Naive thymus-derived CD8-positive, alpha-beta T cell (primary cell): ENCODE measurements at regions of chr1 and their contacts with region 1.

Region 1: DNA sequence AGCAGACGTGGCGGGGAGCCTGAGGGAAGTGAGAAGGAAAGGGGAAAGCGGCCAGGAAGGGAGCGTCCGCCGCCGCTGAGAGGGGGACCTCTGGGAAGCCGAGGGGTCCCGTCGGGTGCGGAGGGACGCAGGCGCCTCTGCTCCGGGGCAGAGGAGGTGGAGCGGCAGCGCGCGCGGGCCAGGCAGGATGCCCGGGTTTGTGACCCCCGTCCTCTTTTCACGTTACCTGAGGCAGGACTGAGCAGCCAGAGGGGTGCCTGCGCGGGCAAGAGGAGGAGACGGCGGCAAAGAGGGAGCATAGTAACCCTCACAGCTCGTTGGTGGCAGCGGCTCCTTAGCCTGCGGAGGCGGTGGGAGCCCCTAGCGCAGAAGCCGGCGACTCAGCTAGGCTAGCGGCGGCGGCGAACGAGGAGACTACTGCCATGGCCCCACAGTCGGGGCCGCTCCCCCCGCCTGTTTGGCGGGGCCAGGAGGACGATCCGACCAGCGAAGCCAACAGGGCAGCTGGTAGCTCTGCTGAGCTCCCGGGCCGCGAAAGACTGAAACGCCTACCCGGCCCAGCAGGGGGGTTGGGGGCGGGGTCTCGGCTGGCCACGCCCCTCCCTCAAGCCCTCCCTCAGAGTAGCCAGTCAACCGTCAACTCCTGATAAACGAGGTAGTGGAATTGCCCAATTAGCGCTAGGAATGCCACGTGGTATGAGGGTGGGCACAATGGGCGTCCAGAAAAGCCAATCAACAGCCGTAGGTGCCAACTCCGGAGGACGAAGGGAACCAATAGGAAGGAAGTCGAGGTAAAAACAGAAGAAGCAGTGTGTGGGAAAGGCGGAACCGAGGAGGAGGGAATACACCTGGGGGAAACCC is at the start of gene TESK2:
- DNase-seq: peak; percentile 94 to 98 (median 97)
- ATAC-seq: peak; percentile 91 to 94
- H3K4me3 Mint-ChIP-seq: no peak within 1 kb of the TSS
- H3K27ac Mint-ChIP-seq: no peak within 1 kb of the TSS
- H3K4me1 Mint-ChIP-seq: peaks cover 6 to 13% (median 12%) of the 10 kb centered on the region in 4 donors
- H3K27me3 Mint-ChIP-seq: no peaks in the 10 kb centered on the region
- polyA plus RNA-seq, gene TESK2: 2.3 to 3.1 (median 2.7) TPM

Region 2: DNA sequence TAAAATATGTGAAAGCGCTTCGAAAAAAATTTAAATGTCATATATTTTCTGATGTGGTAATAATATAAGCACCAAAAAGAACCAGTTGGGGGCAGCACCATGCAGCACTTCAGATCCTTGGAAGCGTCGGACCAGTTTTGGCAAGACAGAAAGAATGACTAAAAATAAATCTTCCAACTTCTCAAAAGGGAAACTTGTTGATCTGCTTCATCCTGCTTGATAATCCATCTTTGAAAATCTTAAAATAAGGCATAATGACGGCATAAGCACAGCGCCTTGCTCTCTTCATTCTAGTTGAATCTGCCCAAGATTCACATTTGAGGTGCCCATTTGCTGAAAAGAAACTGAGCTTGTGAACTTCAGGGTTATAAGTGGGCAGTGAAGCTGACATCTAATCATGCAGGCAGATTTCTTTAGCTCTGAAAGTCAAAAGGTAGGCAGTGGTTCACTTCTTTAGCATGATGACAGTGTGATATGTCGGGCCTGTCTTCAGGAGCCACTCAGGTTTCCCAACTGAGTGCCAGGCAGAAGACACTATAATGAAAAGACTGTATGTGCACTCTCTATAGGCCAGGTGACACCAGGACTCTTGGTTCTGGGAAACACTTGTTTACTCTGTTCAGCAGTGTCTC is 130.9 kb before region 1 on chr1:
- POLR2A ChIA-PET with region 1: interaction called, 10 read pairs
- DNase-seq: peak in 9 of 10 donors; percentile 23 to 73 (median 46)
- ATAC-seq: peak; percentile 59 to 75
- H3K4me3 Mint-ChIP-seq: peak overlapping the region in 2 of 10 donors; percentile 6 to 46
- H3K27ac Mint-ChIP-seq: peak overlapping the region in 4 of 10 donors; percentile 2 to 47 (median 26)
- H3K4me1 Mint-ChIP-seq: peaks cover 2 to 6% (median 5%) of the 10 kb centered on the region in 4 donors
- H3K27me3 Mint-ChIP-seq: no peaks in the 10 kb centered on the region

Region 3: GRCh38 chr1:45430490-45430889 is 60.4 kb before region 1 on chr1:
- POLR2A ChIA-PET with region 1: no interaction called
- DNase-seq: no peak
- ATAC-seq: no peak
- H3K4me3 Mint-ChIP-seq: no peak overlapping the region
- H3K27ac Mint-ChIP-seq: no peak overlapping the region
- H3K4me1 Mint-ChIP-seq: peaks cover 0 to 5% (median under 1%) of the 10 kb centered on the region in 4 donors
- H3K27me3 Mint-ChIP-seq: no peaks in the 10 kb centered on the region

Region 4: DNA sequence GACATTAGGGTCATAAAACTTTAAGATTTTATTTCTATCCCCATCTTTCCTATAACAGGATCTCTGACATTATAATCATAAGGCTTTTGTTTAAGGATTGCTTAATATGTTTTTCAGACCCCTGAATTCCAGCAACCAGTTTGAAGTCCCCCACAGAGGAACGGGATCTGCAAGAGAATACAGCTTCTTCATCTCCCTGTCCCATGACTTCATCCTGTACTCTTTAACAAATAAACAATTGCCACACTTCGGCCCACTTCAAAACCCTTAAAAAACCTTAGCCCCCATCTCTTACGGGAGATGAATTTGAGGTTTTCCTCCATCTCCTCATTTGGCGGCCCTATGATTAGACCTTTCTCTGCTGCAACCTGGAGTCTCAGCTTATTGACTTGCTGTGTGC is 35.7 kb before region 1 on chr1:
- POLR2A ChIA-PET with region 1: no interaction called
- DNase-seq: no peak
- ATAC-seq: no peak
- H3K4me3 Mint-ChIP-seq: no peak overlapping the region
- H3K27ac Mint-ChIP-seq: peak overlapping the region in 1 of 10 donors; percentile 29
- H3K4me1 Mint-ChIP-seq: peaks cover 0 to 2% (median 0%) of the 10 kb centered on the region in 4 donors
- H3K27me3 Mint-ChIP-seq: no peaks in the 10 kb centered on the region

Region 5: DNA sequence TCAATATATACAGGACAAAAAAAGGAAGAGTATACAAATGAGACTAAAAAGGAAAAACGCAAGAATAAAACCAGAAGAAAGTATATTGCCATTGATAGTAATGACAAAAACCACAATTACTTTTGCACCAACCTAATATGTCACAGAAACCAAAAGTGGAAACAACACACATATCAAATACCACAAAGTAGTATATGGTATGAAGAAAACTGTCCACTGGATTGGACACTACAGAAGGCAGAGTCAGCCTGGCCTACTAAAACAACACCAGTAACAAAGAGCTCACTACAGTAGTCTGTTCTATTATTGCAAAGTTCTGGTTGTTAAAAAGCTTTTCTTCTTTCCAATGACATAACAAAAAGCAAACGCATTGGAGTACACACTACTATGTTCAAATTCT is 17.6 kb before region 1 on chr1:
- POLR2A ChIA-PET with region 1: no interaction called
- DNase-seq: no peak
- ATAC-seq: no peak
- H3K4me3 Mint-ChIP-seq: no peak overlapping the region
- H3K27ac Mint-ChIP-seq: no peak overlapping the region
- H3K4me1 Mint-ChIP-seq: peaks cover 0 to 8% (median 1%) of the 10 kb centered on the region in 4 donors
- H3K27me3 Mint-ChIP-seq: no peaks in the 10 kb centered on the region